ENCODE measurements at regions of chr17 and their contacts with region 1.

Region 1: GRCh38 chr17:53680745-53681144 is 142.0 kb upstream of the KIF2B start:
- H3K4me3 ChIP-seq: no peak overlapping the region
- H3K27ac ChIP-seq: no peak overlapping the region
- H3K4me1 ChIP-seq: no peaks in the 10 kb centered on the region
- CTCF ChIP-seq: no peak

Region 2: GRCh38 chr17:53646835-53647234 is 33.9 kb before region 1 on chr17:
- CTCF ChIA-PET with region 1: no interaction called
- POLR2A ChIA-PET with region 1: interaction called, 10 read pairs
- H3K4me3 ChIP-seq: no peak overlapping the region
- H3K27ac ChIP-seq: no peak overlapping the region
- H3K4me1 ChIP-seq: no peaks in the 10 kb centered on the region
- CTCF ChIP-seq: no peak

Region 3: GRCh38 chr17:53722407-53722806 is 41.7 kb after region 1 on chr17:
- CTCF ChIA-PET with region 1: no interaction called
- POLR2A ChIA-PET with region 1: no interaction called
- H3K4me3 ChIP-seq: no peak overlapping the region
- H3K27ac ChIP-seq: no peak overlapping the region
- H3K4me1 ChIP-seq: no peaks in the 10 kb centered on the region
- CTCF ChIP-seq: no peak